ENCODE measurements at regions of chr6 and their contacts with region 1.

Region 1: DNA sequence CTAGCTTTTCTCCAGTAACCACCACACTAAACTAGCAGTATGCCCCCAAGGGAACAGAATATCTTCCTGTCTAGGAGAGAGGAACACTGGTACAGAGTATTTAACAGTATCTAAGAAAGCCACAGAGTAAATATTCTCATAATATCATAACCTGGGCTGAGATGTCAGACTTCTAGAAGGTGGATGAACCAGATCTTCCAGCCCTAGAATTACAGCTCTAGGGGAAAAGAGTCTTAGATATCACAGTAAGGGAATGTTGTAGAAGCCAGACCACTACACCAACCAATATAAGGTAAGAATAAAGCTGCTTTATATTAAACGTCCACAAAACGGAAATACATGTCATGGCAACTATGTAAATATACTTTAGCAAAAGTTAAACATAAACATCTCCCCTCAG is 12.4 kb downstream of the SERINC1 start:
- DNase-seq: no peak
- H3K4me3 ChIP-seq: no peak overlapping the region
- H3K27ac ChIP-seq: no peak overlapping the region
- H3K4me1 ChIP-seq: peaks cover 42 to 80% (median 69%) of the 10 kb centered on the region in 4 donors
- H3K27me3 ChIP-seq: no peaks in the 10 kb centered on the region
- CTCF ChIP-seq: no peak
- EP300 ChIP-seq: no peak
- POLR2A ChIP-seq: no peak

Region 2: GRCh38 chr6:122308074-122308473 is 151.1 kb before region 1 on chr6:
- intact Hi-C with region 1: no loop called
- DNase-seq: no peak
- H3K4me3 ChIP-seq: no peak overlapping the region
- H3K27ac ChIP-seq: no peak overlapping the region
- H3K4me1 ChIP-seq: no peaks in the 10 kb centered on the region
- H3K27me3 ChIP-seq: no peaks in the 10 kb centered on the region
- CTCF ChIP-seq: no peak
- EP300 ChIP-seq: no peak
- POLR2A ChIP-seq: no peak

Region 3: GRCh38 chr6:122399384-122400158 is 59.6 kb before region 1 on chr6 and contains the start of gene HSF2:
- intact Hi-C with region 1: no loop called
- DNase-seq: peak; percentile 99
- H3K4me3 ChIP-seq: peak within 1 kb of the TSS; percentile 76 to 97 (median 95)
- H3K27ac ChIP-seq: peak within 1 kb of the TSS; percentile 92 to 97 (median 95)
- H3K4me1 ChIP-seq: peaks cover 5 to 55% (median 50%) of the 10 kb centered on the region in 4 donors
- H3K27me3 ChIP-seq: no peaks in the 10 kb centered on the region
- CTCF ChIP-seq: peak; percentile 19 to 33 (median 26)
- EP300 ChIP-seq: no peak
- POLR2A ChIP-seq: no peak
- total RNA-seq, gene HSF2: 26.8 to 29.9 (median 28.4) TPM

Region 4: GRCh38 chr6:122422614-122423267 is 36.5 kb before region 1 on chr6:
- intact Hi-C with region 1: loop called (anchors 5 kb)
- DNase-seq: no peak
- H3K4me3 ChIP-seq: no peak overlapping the region
- H3K27ac ChIP-seq: no peak overlapping the region
- H3K4me1 ChIP-seq: no peaks in the 10 kb centered on the region
- H3K27me3 ChIP-seq: no peaks in the 10 kb centered on the region
- CTCF ChIP-seq: no peak
- EP300 ChIP-seq: no peak
- POLR2A ChIP-seq: no peak

Region 5: DNA sequence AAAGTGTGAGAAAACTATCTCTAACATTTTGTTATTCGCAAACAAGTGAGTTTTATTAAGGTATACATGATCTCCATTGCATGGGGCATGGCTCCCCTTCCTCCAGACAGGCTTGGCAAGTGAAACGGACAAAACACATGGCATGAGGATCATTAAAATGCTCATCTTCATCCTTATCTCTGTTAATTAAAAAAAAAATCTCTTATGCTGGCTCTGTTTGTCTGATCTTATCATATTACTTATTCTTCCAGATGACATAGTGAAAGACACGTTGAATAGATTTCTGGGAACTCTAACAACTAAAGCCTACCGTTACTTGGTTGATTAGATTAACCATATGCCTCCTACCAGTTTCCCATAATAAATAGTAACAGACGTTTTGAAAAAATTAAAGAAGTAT is 626.2 kb after region 1 on chr6:
- intact Hi-C with region 1: no loop called
- DNase-seq: no peak
- H3K4me3 ChIP-seq: no peak overlapping the region
- H3K27ac ChIP-seq: no peak overlapping the region
- H3K4me1 ChIP-seq: no peaks in the 10 kb centered on the region
- H3K27me3 ChIP-seq: no peaks in the 10 kb centered on the region
- CTCF ChIP-seq: no peak
- EP300 ChIP-seq: no peak
- POLR2A ChIP-seq: no peak